HepG2 (cell line): ENCODE measurements at regions of chr9 and their contacts with region 1.

Region 1: GRCh38 chr9:94507531-94508258 is 47.2 kb upstream of the PCAT7 start:
- DNase-seq: peak; percentile 88
- ATAC-seq: peak; percentile 94
- H3K4me3 ChIP-seq: peak overlapping the region in 2 of 3 experiments; percentile 18 to 27; a peak in 1 of 6 replicates
- H3K27ac ChIP-seq: peak overlapping the region; percentile 62
- H3K4me1 ChIP-seq: peaks cover 45% of the 10 kb centered on the region
- H3K27me3 ChIP-seq: no peaks in the 10 kb centered on the region
- CTCF ChIP-seq: no peak
- EP300 ChIP-seq: peak in 1 of 2 experiments; percentile 77; a peak in 2 of 4 replicates
- POLR2A ChIP-seq: no peak
- RAD21 ChIP-seq: no peak

Region 2: DNA sequence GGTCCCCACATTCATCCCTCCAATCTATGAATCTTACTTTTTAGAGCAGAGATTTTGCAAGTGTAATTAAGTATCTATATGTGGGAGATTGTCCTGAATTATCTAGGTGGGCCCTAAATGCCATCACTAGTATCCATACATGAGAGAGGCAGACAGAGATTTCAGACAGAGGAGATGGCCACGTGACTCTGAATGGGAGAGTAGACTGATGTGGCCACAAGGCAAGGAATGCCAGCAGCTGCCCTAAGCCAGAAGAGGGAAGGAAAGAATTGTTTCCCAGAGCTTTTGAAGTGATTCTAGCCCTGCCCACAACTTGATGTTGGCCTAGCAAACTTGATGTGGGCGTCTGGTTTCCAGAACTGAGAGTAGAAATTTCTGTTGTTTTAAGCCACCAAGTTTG is 42.9 kb before region 1 on chr9:
- CTCF ChIA-PET with region 1: no interaction called
- POLR2A ChIA-PET with region 1: no interaction called
- in situ Hi-C with region 1: loop called (anchors 5 kb)
- intact Hi-C with region 1: no loop called
- DNase-seq: no peak
- ATAC-seq: no peak
- H3K4me3 ChIP-seq: no peak overlapping the region
- H3K27ac ChIP-seq: no peak overlapping the region
- H3K4me1 ChIP-seq: no peaks in the 10 kb centered on the region
- H3K27me3 ChIP-seq: no peaks in the 10 kb centered on the region
- CTCF ChIP-seq: no peak
- EP300 ChIP-seq: no peak
- POLR2A ChIP-seq: no peak
- RAD21 ChIP-seq: no peak

Region 3: GRCh38 chr9:94480205-94480604 is 27.5 kb before region 1 on chr9:
- CTCF ChIA-PET with region 1: no interaction called
- POLR2A ChIA-PET with region 1: no interaction called
- in situ Hi-C with region 1: no loop called
- intact Hi-C with region 1: no loop called
- DNase-seq: no peak
- ATAC-seq: peak; percentile 62
- H3K4me3 ChIP-seq: no peak overlapping the region
- H3K27ac ChIP-seq: no peak overlapping the region
- H3K4me1 ChIP-seq: no peaks in the 10 kb centered on the region
- H3K27me3 ChIP-seq: no peaks in the 10 kb centered on the region
- CTCF ChIP-seq: no peak
- EP300 ChIP-seq: no peak
- POLR2A ChIP-seq: no peak
- RAD21 ChIP-seq: no peak

Region 4: GRCh38 chr9:94525396-94526035 is 17.8 kb after region 1 on chr9:
- CTCF ChIA-PET with region 1: no interaction called
- POLR2A ChIA-PET with region 1: no interaction called
- in situ Hi-C with region 1: no loop called
- intact Hi-C with region 1: no loop called
- DNase-seq: no peak
- ATAC-seq: no peak
- H3K4me3 ChIP-seq: no peak overlapping the region
- H3K27ac ChIP-seq: no peak overlapping the region
- H3K4me1 ChIP-seq: no peaks in the 10 kb centered on the region
- H3K27me3 ChIP-seq: no peaks in the 10 kb centered on the region
- CTCF ChIP-seq: no peak
- EP300 ChIP-seq: no peak
- POLR2A ChIP-seq: no peak
- RAD21 ChIP-seq: no peak